ENCODE measurements at regions of chr1 and their contacts with region 1.

Region 1: DNA sequence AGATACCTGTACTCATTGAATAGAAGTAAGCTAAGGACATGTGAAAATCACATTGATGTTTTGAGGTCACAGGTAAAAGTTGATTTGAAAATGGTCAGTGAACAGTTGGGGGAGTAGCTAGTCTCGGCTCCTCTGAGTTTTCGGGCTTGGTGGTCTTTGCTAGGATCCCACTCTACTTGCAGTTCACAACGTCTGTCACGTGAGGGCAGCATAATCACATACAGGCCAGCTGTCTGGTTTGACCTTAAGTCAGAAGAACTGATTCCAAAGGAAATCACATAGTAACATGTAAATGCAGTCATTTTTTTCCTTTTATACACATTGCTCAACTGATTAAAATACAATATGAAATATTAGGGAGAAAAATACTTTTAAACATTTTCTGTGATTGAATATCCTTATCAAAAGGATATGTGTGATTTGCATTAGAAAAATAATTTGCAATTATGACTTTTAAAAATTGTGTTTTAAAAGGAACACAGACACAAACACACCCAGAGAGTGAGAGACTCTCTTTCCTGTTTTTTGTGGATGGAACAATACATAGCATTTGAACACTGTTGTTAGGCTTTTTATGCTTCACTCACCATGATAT is 21.8 kb upstream of the PDC start:
- DNase-seq: peak; percentile 17
- H3K4me3 Mint-ChIP-seq: no peak overlapping the region
- H3K27ac Mint-ChIP-seq: no peak overlapping the region
- H3K4me1 Mint-ChIP-seq: no peaks in the 10 kb centered on the region
- H3K27me3 Mint-ChIP-seq: peaks cover 19% of the 10 kb centered on the region

Region 2: DNA sequence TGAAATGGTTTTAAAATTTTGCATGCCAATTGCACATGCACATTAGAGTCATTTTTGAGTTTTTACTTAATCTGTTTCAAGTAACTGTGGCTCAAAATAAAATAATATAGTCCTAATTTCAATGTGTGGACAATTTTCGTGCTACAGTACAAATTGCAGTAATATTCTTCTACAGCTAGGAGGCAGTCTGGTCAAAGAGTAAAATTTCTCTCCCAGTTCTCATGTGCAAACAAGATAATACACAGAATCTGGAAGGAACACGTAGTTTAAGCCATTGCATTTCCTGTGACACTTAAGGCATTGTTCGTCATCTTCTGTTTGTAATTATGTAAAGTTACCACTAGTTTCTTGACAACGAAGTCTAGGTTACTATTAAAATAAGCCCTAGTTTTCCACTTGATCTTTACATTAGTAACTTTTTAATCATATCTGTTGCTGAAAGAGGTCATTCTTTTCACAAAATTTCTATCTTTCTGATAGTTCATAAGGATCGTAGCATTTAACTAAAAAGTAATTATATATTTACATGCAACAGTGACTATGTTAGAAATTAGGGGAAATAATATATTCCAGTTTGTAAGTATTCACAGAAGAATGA is 78.2 kb before region 1 on chr1:
- intact Hi-C with region 1: loop called (anchors 5 kb)
- DNase-seq: no peak
- H3K4me3 Mint-ChIP-seq: no peak overlapping the region
- H3K27ac Mint-ChIP-seq: no peak overlapping the region
- H3K4me1 Mint-ChIP-seq: peaks cover 14% of the 10 kb centered on the region
- H3K27me3 Mint-ChIP-seq: no peaks in the 10 kb centered on the region

Region 3: DNA sequence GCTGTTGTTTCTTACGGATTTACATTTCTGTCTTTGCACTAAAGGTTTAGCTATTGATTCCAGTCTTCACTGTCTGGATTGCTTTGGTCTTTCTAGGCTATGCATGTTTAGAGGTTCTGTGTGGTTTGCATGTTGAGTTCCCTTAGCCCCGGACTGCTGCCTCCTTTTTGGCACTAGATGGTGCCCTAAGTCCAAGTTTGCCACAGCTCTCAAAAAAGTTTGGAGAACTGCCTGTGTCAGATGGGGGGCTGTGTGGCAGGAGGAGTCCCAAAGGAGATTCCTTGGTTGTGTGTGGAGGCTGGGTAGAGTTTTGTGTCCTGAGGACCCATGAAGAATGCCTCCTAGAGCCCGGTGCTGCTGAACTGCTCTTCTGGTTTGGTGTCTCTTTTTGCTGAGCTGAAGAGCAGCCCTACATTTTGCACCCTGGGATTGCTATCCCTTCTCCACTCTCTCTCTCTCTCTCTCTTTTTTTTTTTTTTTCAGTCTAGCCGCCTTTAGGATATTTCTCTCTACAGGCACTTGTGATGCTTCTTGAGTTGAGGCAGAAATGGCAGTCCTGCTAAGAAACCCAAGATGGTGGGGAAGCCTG is 123.1 kb after region 1 on chr1:
- intact Hi-C with region 1: loop called (anchors 2 kb)
- DNase-seq: no peak
- H3K4me3 Mint-ChIP-seq: no peak overlapping the region
- H3K27ac Mint-ChIP-seq: peak overlapping the region; percentile 26
- H3K4me1 Mint-ChIP-seq: peaks cover 7% of the 10 kb centered on the region
- H3K27me3 Mint-ChIP-seq: peaks cover 60% of the 10 kb centered on the region

Region 4: DNA sequence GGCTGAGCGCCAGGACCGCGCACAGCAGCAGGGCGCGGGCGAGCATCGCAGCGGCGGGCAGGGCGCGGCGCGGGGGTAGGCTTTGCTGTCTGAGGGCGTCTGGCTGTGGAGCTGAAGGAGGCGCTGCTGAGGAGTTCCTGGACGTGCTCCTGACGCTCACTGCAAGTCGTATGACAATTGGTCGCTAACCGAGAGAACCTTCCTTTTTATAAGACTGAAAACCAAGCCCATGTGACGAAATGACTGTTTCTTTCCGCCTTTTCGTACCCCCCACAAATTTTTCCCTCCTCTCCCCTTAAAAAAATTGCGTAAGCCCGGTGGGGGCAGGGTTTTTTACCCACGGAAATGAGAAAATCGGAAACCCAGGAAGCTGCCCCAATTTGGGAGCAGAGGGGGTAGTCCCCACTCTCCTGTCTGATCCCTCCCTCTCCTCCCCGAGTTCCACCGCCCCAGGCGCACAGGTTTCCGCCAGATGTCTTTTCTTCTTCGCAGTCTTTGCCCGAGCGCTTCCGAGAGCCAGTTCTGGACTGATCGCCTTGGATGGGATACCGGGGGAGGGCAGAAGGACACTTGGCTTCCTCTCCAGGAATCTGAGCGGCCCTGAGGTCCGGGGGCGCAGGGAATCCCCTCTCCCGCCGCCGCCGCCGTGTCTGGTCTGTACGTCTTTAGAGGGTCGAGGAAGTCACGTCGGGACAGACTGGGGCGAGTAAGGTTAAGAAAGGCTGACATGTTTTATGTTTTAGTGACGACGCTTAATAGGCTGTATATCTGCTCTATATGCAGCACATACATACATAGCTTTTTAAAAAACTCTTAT is 197.7 kb after region 1 on chr1 and contains the start of gene PTGS2:
- intact Hi-C with region 1: loop called (anchors 10 kb)
- DNase-seq: peak; percentile 62
- H3K4me3 Mint-ChIP-seq: peak within 1 kb of the TSS; percentile 87
- H3K27ac Mint-ChIP-seq: peak within 1 kb of the TSS; percentile 83
- H3K4me1 Mint-ChIP-seq: peaks cover 18% of the 10 kb centered on the region
- H3K27me3 Mint-ChIP-seq: peaks cover 49% of the 10 kb centered on the region
- total RNA-seq, gene PTGS2: 109 and 112 TPM in 2 replicates

Region 5: GRCh38 chr1:186828611-186829454 is 346.1 kb after region 1 on chr1 and contains the start of gene PLA2G4A:
- intact Hi-C with region 1: loop called (anchors 10 kb)
- DNase-seq: no peak
- H3K4me3 Mint-ChIP-seq: peak within 1 kb of the TSS; percentile 83
- H3K27ac Mint-ChIP-seq: peak within 1 kb of the TSS; percentile 69
- H3K4me1 Mint-ChIP-seq: peaks cover 8% of the 10 kb centered on the region
- H3K27me3 Mint-ChIP-seq: peaks cover 18% of the 10 kb centered on the region
- total RNA-seq, gene PLA2G4A: 27.1 and 28.2 TPM in 2 replicates